Esophagus muscularis mucosa (tissue), 4 donors: ENCODE measurements at regions of chr13 and their contacts with region 1.

Region 1: DNA sequence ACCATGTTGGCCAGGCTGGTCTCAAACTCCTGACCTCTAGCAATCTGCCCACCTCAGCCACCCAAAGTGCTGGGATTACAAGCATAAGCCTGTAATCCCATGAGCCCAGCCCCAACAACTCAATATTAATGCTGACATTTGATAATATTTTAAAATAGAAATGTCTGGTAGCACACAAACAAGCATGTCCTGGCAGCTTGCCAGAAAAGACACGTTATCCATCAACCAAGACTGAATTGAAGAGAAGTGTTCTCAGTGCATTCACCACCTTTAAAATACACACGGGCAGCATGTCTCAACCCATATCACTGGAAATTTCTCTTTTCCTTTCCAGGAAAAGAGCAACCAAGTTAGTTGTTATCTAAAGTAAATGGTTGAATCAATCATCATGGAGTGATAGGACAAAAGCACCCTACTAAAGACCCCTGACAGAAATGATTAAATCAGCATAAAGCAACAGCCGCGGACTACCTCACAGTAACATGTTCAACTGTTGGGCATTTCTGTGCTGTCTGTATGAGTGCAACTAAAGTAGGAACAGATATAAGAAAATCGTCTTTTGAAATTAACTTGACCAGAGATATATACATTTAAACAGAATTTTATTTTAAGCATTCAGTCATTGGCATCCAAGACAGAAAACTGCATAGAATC is 25.0 kb downstream of the LHFPL6 start:
- DNase-seq: no peak
- H3K4me3 ChIP-seq: no peak overlapping the region
- H3K27ac ChIP-seq: no peak overlapping the region
- H3K4me1 ChIP-seq: peaks cover 26 to 52% (median 33%) of the 10 kb centered on the region in 4 donors
- H3K27me3 ChIP-seq: no peaks in the 10 kb centered on the region
- CTCF ChIP-seq: no peak
- EP300 ChIP-seq: no peak
- POLR2A ChIP-seq: no peak

Region 2: GRCh38 chr13:39510316-39510695 is 67.7 kb before region 1 on chr13:
- intact Hi-C with region 1: loop called (anchors 10 kb)
- DNase-seq: no peak
- H3K4me3 ChIP-seq: no peak overlapping the region
- H3K27ac ChIP-seq: no peak overlapping the region
- H3K4me1 ChIP-seq: peaks cover 10 to 33% (median 19%) of the 10 kb centered on the region in 4 donors
- H3K27me3 ChIP-seq: no peaks in the 10 kb centered on the region
- CTCF ChIP-seq: no peak
- EP300 ChIP-seq: no peak
- POLR2A ChIP-seq: no peak

Region 3: DNA sequence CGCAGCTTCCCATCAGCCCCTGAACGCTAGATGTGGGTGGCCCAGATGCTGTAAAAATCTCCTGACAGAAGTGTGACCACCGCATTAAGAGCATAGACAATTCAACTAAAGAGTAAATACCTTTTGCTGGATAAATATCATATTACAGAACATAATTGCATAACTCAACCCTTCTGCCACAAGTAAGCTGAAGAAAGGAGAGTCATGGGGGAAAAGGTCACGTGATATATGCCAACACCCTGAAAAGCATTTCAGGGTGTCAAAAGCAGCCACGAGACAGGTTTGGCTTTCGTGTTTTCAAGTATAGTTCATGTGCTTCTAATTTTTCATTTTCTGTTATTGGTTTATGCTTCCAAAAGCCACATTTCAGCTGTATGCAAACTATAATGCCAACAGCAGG is 46.3 kb before region 1 on chr13:
- intact Hi-C with region 1: no loop called
- DNase-seq: no peak
- H3K4me3 ChIP-seq: no peak overlapping the region
- H3K27ac ChIP-seq: no peak overlapping the region
- H3K4me1 ChIP-seq: peaks cover 33 to 51% (median 47%) of the 10 kb centered on the region in 4 donors
- H3K27me3 ChIP-seq: no peaks in the 10 kb centered on the region
- CTCF ChIP-seq: no peak
- EP300 ChIP-seq: no peak
- POLR2A ChIP-seq: no peak